Naive thymus-derived CD4-positive, alpha-beta T cell (primary cell): ENCODE measurements at regions of chr10 and their contacts with region 1.

Region 1: GRCh38 chr10:91908337-91909116 is 759 bp downstream of the FGFBP3 start:
- DNase-seq: peak; percentile 51 to 79 (median 74)
- ATAC-seq: peak; percentile 91
- H3K4me3 ChIP-seq: peak overlapping the region; percentile 77
- H3K4me3 Mint-ChIP-seq: peak overlapping the region; percentile 85 to 96 (median 93)
- H3K27ac ChIP-seq: peak overlapping the region; percentile 65
- H3K27ac Mint-ChIP-seq: peak overlapping the region; percentile 73 to 92 (median 88)
- H3K4me1 ChIP-seq: peaks cover 0 to 10% of the 10 kb centered on the region in 2 donors
- H3K4me1 Mint-ChIP-seq: peaks cover 18 to 36% (median 28%) of the 10 kb centered on the region in 7 donors
- H3K27me3 ChIP-seq: no peaks in the 10 kb centered on the region
- H3K27me3 Mint-ChIP-seq: peaks cover 0 to 13% (median 0%) of the 10 kb centered on the region in 5 donors

Region 2: DNA sequence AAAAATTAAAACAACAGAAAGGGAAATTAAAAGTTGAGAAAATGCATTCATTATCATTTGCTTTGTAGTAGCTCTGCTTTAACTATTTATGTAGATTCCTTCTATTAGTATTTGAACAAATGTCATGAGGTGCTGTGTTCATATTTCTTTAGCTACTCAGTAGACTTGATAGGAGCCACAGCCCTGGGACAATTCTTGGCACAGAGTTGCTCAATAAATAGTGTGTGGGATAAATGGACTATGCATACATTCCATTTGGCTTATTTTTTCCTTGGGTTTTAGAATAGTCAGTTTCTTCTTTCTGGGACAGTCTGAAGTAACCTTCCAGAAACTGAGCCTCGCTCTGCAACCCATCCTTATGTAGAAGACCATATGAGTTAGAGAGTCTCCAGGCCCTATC is 1023.4 kb before region 1 on chr10:
- CTCF ChIA-PET with region 1: no interaction called
- POLR2A ChIA-PET with region 1: no interaction called
- intact Hi-C with region 1: loop called in 1 of 2 experiments (anchors 5 kb)
- DNase-seq: no peak
- ATAC-seq: no peak
- H3K4me3 ChIP-seq: no peak overlapping the region
- H3K4me3 Mint-ChIP-seq: no peak overlapping the region
- H3K27ac ChIP-seq: no peak overlapping the region
- H3K27ac Mint-ChIP-seq: no peak overlapping the region
- H3K4me1 ChIP-seq: no peaks in the 10 kb centered on the region
- H3K4me1 Mint-ChIP-seq: peaks cover 0 to 8% (median 4%) of the 10 kb centered on the region in 7 donors
- H3K27me3 ChIP-seq: no peaks in the 10 kb centered on the region
- H3K27me3 Mint-ChIP-seq: no peaks in the 10 kb centered on the region

Region 3: DNA sequence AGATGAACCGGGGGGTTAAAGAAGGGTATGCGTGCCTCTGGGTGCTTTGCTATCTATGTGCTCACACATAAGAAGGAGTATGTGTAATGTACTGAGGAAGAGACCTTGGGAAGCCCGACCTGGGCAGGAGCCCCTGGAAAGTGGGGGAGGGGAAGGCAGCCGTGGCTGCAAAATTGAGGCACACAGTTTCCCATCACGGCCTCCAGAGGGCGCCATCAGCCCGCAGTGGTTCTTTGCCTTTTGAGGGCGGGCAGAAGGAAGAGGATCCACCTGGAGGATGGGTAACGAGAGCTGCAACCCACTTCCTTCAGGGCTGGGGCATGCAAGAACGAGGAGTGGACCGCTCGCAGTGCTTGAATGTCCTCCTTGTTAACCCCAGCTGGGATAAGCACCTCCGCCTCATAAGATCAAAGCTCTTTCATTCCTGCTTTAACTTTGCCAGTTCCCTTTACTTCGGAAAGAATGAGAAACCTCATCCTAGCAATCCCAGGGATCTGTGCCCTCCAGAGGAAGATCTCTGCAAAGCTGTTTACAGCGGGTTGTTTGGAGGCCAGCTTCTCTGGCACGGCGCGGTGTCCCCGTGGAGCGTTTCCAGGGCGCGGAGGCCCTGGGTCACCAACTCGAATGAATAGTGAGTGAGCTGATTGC is 610.2 kb before region 1 on chr10:
- CTCF ChIA-PET with region 1: interaction called, 12 read pairs
- POLR2A ChIA-PET with region 1: no interaction called
- intact Hi-C with region 1: loop called (anchors 1 to 2 kb)
- DNase-seq: peak; percentile 63 to 84 (median 77)
- ATAC-seq: peak; percentile 96
- H3K4me3 ChIP-seq: peak overlapping the region; percentile 53
- H3K4me3 Mint-ChIP-seq: peak overlapping the region; percentile 67 to 83 (median 74)
- H3K27ac ChIP-seq: no peak overlapping the region
- H3K27ac Mint-ChIP-seq: peak overlapping the region in 4 of 9 donors; percentile 7 to 74 (median 42)
- H3K4me1 ChIP-seq: peaks cover 0 to 4% of the 10 kb centered on the region in 2 donors
- H3K4me1 Mint-ChIP-seq: peaks cover 4 to 11% (median 10%) of the 10 kb centered on the region in 7 donors
- H3K27me3 ChIP-seq: no peaks in the 10 kb centered on the region
- H3K27me3 Mint-ChIP-seq: peaks cover 6 to 16% (median 10%) of the 10 kb centered on the region in 5 donors

Region 4: GRCh38 chr10:91758303-91759146 is 150.0 kb before region 1 on chr10:
- CTCF ChIA-PET with region 1: interaction called, 61 read pairs
- POLR2A ChIA-PET with region 1: interaction called, 4 read pairs
- intact Hi-C with region 1: loop called (anchors 1 kb)
- DNase-seq: peak in 7 of 9 donors; percentile 28 to 69 (median 56)
- ATAC-seq: peak; percentile 81
- H3K4me3 ChIP-seq: no peak overlapping the region
- H3K4me3 Mint-ChIP-seq: no peak overlapping the region
- H3K27ac ChIP-seq: no peak overlapping the region
- H3K27ac Mint-ChIP-seq: no peak overlapping the region
- H3K4me1 ChIP-seq: no peaks in the 10 kb centered on the region
- H3K4me1 Mint-ChIP-seq: peaks cover 0 to 11% (median 7%) of the 10 kb centered on the region in 7 donors
- H3K27me3 ChIP-seq: no peaks in the 10 kb centered on the region
- H3K27me3 Mint-ChIP-seq: peaks cover 0 to 56% (median 19%) of the 10 kb centered on the region in 5 donors

Region 5: DNA sequence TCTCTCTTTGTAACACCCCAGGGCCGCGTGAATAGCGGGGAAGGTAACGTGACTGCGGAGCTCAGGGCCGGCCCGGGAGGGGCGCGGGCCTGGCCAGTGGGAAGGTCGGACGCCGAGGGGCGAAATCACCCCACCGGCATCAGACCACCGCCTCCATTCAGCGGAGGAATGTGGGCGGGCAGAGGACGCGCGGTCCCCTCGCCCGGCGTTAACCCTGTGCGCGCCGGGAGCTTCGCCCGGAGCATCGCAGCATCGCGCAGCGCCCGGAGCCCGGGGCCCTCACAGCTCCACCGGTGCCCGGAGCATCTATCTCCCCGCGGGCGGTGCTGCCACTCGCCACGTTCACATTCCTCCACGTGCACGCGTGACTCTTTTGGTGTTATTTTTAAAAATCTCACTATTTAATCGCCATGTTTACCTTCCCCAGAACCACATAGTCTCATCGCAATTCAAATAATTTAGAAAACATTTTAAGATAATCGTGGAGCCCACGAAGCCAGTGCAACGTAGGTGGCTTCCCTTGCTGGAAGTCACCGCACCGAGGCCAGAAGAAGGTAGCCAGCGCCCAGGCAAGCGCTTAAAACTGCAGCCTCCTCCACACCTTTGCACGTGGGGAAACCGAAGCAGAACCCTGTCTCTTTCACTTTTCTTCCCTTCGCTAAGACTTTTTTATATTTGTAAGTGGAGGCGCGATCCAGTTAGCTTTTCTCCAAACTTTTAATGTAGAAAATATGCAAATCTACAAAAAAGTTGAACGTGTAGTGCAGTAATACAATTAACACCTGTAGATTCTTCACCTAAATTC is 21.1 kb before region 1 on chr10:
- CTCF ChIA-PET with region 1: interaction called, 4 read pairs
- POLR2A ChIA-PET with region 1: interaction called, 9 read pairs
- intact Hi-C with region 1: loop called in 1 of 2 experiments (anchors 1 kb)
- DNase-seq: peak in 6 of 9 donors; percentile 11 to 40 (median 22)
- ATAC-seq: peak; percentile 71
- H3K4me3 ChIP-seq: peak overlapping the region; percentile 45
- H3K4me3 Mint-ChIP-seq: peak overlapping the region; percentile 79 to 96 (median 91)
- H3K27ac ChIP-seq: peak overlapping the region; percentile 22
- H3K27ac Mint-ChIP-seq: peak overlapping the region in 6 of 9 donors; percentile 22 to 81 (median 64)
- H3K4me1 ChIP-seq: peaks cover 0 to 5% of the 10 kb centered on the region in 2 donors
- H3K4me1 Mint-ChIP-seq: peaks cover 0 to 16% (median 7%) of the 10 kb centered on the region in 7 donors
- H3K27me3 ChIP-seq: peaks cover 0 to 3% of the 10 kb centered on the region in 2 donors
- H3K27me3 Mint-ChIP-seq: peaks cover 6 to 57% (median 19%) of the 10 kb centered on the region in 5 donors

Region 6: DNA sequence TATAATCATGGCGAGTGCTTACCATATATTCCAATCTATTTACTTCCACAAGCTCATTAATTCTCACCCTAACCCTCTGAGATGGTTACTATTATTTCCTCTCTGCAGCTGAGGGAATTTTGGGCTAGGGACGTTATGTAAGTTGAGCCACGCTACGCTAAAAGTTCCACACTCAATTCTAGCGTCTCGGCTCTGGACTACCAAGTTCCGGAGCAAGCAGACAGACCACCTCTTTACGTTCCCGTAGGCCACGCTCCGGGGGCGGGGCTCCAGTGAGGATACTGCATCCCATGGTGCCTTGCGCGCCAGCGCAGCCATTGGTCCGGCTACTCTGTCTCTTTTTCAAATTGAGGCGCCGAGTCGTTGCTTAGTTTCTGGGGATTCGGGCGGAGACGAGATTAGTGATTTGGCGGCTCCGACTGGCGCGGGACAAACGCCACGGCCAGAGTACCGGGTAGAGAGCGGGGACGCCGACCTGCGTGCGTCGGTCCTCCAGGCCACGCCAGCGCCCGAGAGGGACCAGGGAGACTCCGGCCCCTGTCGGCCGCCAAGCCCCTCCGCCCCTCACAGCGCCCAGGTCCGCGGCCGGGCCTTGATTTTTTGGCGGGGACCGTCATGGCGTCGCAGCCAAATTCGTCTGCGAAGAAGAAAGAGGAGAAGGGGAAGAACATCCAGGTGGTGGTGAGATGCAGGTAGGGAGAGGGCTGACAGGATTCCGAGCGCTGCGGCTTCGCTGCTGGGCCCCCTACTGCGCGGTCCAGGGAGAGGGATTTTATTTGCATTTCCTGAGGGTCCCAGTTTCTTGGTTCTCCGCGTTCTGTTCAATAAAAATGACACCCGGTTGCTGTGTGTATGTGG is 684.5 kb after region 1 on chr10 and contains the start of gene KIF11:
- CTCF ChIA-PET with region 1: no interaction called
- POLR2A ChIA-PET with region 1: no interaction called
- intact Hi-C with region 1: loop called in 1 of 2 experiments (anchors 5 kb)
- DNase-seq: peak; percentile 89 to 95 (median 94)
- ATAC-seq: peak; percentile 89
- H3K4me3 ChIP-seq: peak within 1 kb of the TSS; percentile 83
- H3K4me3 Mint-ChIP-seq: peak within 1 kb of the TSS; percentile 95 to 100 (median 99)
- H3K27ac ChIP-seq: peak within 1 kb of the TSS; percentile 96
- H3K27ac Mint-ChIP-seq: peak within 1 kb of the TSS; percentile 96 to 100 (median 100)
- H3K4me1 ChIP-seq: peaks cover 12 to 28% of the 10 kb centered on the region in 2 donors
- H3K4me1 Mint-ChIP-seq: peaks cover 9 to 54% (median 28%) of the 10 kb centered on the region in 7 donors
- H3K27me3 ChIP-seq: no peaks in the 10 kb centered on the region
- H3K27me3 Mint-ChIP-seq: peaks cover 0 to 5% (median 0%) of the 10 kb centered on the region in 5 donors
- total RNA-seq, gene KIF11: 0.32 to 52.6 (median 0.75) TPM

Region 7: GRCh38 chr10:93015722-93016121 is 1107.2 kb after region 1 on chr10:
- CTCF ChIA-PET with region 1: no interaction called
- POLR2A ChIA-PET with region 1: no interaction called
- intact Hi-C with region 1: no loop called
- DNase-seq: no peak
- ATAC-seq: no peak
- H3K4me3 ChIP-seq: no peak overlapping the region
- H3K4me3 Mint-ChIP-seq: no peak overlapping the region
- H3K27ac ChIP-seq: no peak overlapping the region
- H3K27ac Mint-ChIP-seq: no peak overlapping the region
- H3K4me1 ChIP-seq: no peaks in the 10 kb centered on the region
- H3K4me1 Mint-ChIP-seq: no peaks in the 10 kb centered on the region
- H3K27me3 ChIP-seq: no peaks in the 10 kb centered on the region
- H3K27me3 Mint-ChIP-seq: no peaks in the 10 kb centered on the region